Heart right ventricle (tissue), 16 donors: ENCODE measurements at regions of chr16 and their contacts with region 1.

Region 1: DNA sequence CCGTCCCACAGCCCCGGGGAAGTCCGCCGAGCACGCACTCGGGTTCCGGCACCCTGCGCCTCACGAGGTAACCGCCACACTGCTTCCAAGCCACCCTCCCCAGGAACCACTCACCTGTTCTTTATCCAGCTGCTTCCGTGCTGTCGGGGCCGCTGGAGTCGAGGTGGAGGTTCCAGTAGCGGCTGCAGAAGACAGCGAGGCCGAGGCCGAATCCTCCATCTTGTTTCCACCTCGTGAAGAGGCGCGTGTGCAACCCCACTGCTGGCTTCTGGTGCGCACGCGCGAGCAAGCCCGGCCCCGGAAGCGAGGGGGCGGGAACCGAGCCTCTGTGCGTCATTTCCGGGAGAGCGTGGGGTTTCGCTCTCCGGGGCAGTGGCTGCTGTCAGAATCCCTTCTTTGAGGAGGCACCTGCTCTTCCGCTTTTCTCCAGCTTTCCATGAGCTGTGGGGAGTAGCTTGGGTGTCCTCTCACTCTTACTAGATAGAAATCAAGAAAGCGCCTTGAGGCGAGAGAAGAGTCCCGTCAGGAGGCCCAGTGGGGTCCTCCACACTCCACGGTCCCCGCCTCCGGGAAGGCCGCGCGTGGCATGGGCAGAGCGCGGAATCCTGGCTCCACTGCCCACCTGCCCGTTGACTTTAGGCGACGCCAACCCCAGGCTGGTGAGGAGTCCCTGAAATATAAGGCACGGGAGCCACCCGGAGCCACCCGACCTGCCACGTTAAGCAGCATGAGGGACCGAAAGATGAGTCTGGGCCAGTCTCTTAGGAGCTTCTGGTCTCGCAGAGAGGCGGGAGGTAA is at the start of gene RSL1D1:
- DNase-seq: peak; percentile 91 to 92
- ATAC-seq: peak; percentile 97 to 100 (median 99)
- H3K4me3 ChIP-seq: peak within 1 kb of the TSS; percentile 65 to 94 (median 83)
- H3K27ac ChIP-seq: peak within 1 kb of the TSS; percentile 52 to 94 (median 89)
- H3K4me1 ChIP-seq: peaks cover 0 to 51% (median 36%) of the 10 kb centered on the region in 9 donors
- H3K27me3 ChIP-seq: no peaks in the 10 kb centered on the region
- CTCF ChIP-seq: no peak
- total RNA-seq, gene RSL1D1: 89.4 to 133 (median 105) TPM

Region 2: DNA sequence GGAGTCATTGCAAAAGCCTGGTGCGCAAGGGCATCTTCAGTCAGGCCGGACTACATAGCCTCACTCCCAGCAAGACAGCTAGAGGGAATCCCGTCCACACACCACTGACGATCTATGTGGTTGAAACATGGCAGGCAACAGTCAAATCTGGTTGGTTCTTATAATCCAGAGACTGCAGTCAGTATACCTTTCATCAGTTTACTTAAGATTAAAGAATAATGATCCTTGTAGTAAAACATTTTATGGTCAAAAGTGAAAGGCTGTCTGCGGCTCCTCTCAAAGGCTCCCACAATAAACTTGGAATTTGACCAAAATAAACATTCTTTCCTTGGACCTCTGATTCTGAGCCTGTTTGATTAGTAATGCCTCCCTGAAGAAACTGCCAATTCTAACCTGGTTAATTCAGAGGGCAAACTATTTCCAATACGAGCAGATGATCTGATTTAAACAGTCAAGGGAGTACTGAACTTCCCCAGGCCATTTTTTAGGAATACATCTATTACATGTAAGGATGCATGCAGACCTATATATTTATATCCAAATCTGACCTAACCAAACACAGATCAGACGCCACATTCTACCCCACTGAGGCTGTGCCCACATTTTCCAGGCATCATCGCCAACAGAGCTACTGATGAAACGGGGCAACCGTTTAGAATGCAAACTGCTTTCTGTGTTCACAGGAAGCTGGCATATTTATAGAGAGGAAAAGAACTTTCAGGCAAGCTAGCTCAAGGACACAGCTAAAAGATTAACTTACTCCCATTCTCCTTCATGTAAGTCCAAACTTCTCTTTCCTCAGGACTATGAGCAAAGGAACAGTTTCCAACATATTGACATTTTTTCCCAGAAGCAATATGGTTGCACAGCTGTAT is 93.6 kb before region 1 on chr16:
- intact Hi-C with region 1: loop called in 2 of 10 experiments (anchors 10 kb)
- DNase-seq: no peak
- ATAC-seq: peak in 1 of 8 donors; percentile 61
- H3K4me3 ChIP-seq: no peak overlapping the region
- H3K27ac ChIP-seq: peak overlapping the region in 2 of 10 donors; percentile 6 to 26
- H3K4me1 ChIP-seq: peaks cover 0 to 14% (median 9%) of the 10 kb centered on the region in 9 donors
- H3K27me3 ChIP-seq: no peaks in the 10 kb centered on the region
- CTCF ChIP-seq: no peak

Region 3: GRCh38 chr16:11768849-11769248 is 82.6 kb before region 1 on chr16:
- intact Hi-C with region 1: loop called in 1 of 10 experiments (anchors 10 kb)
- DNase-seq: no peak
- ATAC-seq: no peak
- H3K4me3 ChIP-seq: no peak overlapping the region
- H3K27ac ChIP-seq: peak overlapping the region in 1 of 10 donors; percentile 59
- H3K4me1 ChIP-seq: peaks cover 0 to 14% (median 0%) of the 10 kb centered on the region in 9 donors
- H3K27me3 ChIP-seq: no peaks in the 10 kb centered on the region
- CTCF ChIP-seq: no peak

Region 4: DNA sequence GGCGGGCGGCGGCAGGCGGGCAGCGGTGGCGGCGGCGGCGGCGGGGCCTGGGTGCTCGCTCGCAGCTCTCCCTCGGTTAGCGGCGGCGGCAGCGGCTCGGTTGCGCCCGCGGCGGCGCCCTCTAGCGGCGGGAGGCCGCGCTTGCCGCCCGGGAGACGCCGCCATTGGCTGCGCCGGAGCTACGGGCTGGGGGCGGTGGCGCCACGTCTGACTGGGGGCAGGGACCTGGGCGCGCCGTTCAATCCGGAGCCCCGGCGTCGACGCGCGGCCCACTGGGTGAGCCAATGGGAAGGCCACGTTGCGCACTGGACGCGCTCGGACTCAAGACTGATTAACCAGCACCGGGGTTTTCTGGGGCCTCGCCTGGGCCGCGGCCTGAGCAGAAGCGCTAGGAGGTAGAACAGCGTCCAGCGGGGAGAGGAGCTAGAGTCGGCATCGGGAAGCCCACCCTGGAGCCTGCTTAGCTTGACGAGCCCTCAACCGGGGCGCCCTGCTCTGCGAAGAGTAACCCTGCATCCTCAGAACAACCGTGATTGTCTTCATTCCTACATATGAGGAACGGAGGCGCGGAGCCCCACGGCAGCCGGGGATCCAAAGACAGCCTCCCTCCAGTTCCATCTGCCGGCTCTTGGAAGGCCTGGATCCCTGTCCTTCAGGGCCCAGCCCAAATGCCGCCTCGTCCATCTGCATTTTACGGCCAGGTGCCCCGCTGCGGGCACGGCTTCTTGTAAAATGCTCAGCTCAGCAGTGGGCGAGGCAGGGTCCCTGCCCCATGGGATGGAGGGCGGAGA is 54.1 kb before region 1 on chr16 and contains the start of gene ZC3H7A:
- intact Hi-C with region 1: loop called in 3 of 10 experiments (anchors 1 to 10 kb)
- DNase-seq: peak; percentile 96 to 97
- ATAC-seq: peak; percentile 98 to 99 (median 99)
- H3K4me3 ChIP-seq: peak within 1 kb of the TSS; percentile 78 to 100 (median 96)
- H3K27ac ChIP-seq: peak within 1 kb of the TSS; percentile 92 to 100 (median 98)
- H3K4me1 ChIP-seq: peaks cover 3 to 74% (median 64%) of the 10 kb centered on the region in 9 donors
- H3K27me3 ChIP-seq: no peaks in the 10 kb centered on the region
- CTCF ChIP-seq: peak; percentile 66 to 97 (median 83)
- total RNA-seq, gene ZC3H7A: 26.8 to 36.1 (median 30.6) TPM

Region 5: GRCh38 chr16:11915644-11916523 is 64.4 kb after region 1 on chr16 and contains the start of gene GSPT1:
- intact Hi-C with region 1: loop called in 3 of 10 experiments (anchors 5 to 10 kb)
- DNase-seq: peak; percentile 99 to 100
- ATAC-seq: peak; percentile 96 to 99 (median 98)
- H3K4me3 ChIP-seq: peak within 1 kb of the TSS; percentile 66 to 92 (median 83)
- H3K27ac ChIP-seq: peak within 1 kb of the TSS; percentile 55 to 99 (median 95)
- H3K4me1 ChIP-seq: peaks cover 4 to 41% (median 33%) of the 10 kb centered on the region in 9 donors
- H3K27me3 ChIP-seq: peaks cover 0 to 5% (median 0%) of the 10 kb centered on the region in 7 donors
- CTCF ChIP-seq: peak in 5 of 9 donors; percentile 17 to 35 (median 24)
- total RNA-seq, gene GSPT1: 85.5 to 117 (median 95.1) TPM